ENCODE measurements at regions of chr11 and their contacts with region 1.

Region 1: GRCh38 chr11:104705490-104706190 is 192.6 kb downstream of the CASP12 start:
- DNase-seq: peak; percentile 83
- ATAC-seq: peak; percentile 93
- H3K4me3 Mint-ChIP-seq: peak overlapping the region; percentile 58
- H3K27ac Mint-ChIP-seq: peak overlapping the region; percentile 75
- H3K4me1 Mint-ChIP-seq: peaks cover 52% of the 10 kb centered on the region
- H3K27me3 Mint-ChIP-seq: no peaks in the 10 kb centered on the region

Region 2: GRCh38 chr11:104623518-104623917 is 82.1 kb before region 1 on chr11:
- CTCF ChIA-PET with region 1: no interaction called
- POLR2A ChIA-PET with region 1: interaction called, 3 read pairs
- intact Hi-C with region 1: loop called (anchors 1 to 2 kb)
- DNase-seq: no peak
- ATAC-seq: peak; percentile 69
- H3K4me3 Mint-ChIP-seq: no peak overlapping the region
- H3K27ac Mint-ChIP-seq: no peak overlapping the region
- H3K4me1 Mint-ChIP-seq: peaks cover 21% of the 10 kb centered on the region
- H3K27me3 Mint-ChIP-seq: no peaks in the 10 kb centered on the region

Region 3: DNA sequence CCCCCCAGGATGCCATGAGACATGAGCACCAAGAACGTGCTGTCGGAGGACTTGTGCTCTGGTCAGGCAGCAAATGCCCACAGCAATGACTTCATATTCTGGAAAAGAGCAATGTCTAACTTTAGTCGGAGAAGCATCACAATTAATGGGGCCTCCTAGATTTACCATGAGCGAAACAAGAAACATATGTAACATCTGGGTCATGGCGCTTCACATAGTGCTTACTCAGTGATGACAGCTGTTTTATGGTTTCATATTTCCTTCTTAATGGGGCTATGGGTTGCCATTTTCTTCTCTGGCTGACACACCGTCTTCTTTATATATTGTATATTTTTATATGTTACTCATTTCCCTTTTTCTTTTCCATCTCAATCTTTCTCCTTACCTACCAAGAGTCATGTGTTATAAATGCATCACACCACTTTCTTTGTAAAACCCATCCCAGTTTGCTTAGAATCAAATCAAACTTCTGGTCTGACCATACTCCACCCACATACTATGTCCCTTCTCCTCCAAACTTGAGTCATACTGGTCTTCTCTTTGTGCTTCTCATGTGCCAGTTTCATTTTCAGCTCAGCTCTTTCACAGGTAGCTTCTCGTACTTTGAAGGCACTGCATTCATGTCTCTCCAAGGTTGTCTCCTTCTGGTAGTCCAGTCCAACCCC is 202.0 kb after region 1 on chr11:
- CTCF ChIA-PET with region 1: no interaction called
- POLR2A ChIA-PET with region 1: no interaction called
- intact Hi-C with region 1: loop called (anchors 1 to 10 kb)
- DNase-seq: peak; percentile 11
- ATAC-seq: peak; percentile 92
- H3K4me3 Mint-ChIP-seq: no peak overlapping the region
- H3K27ac Mint-ChIP-seq: peak overlapping the region; percentile 47
- H3K4me1 Mint-ChIP-seq: peaks cover 30% of the 10 kb centered on the region
- H3K27me3 Mint-ChIP-seq: no peaks in the 10 kb centered on the region

Region 4: DNA sequence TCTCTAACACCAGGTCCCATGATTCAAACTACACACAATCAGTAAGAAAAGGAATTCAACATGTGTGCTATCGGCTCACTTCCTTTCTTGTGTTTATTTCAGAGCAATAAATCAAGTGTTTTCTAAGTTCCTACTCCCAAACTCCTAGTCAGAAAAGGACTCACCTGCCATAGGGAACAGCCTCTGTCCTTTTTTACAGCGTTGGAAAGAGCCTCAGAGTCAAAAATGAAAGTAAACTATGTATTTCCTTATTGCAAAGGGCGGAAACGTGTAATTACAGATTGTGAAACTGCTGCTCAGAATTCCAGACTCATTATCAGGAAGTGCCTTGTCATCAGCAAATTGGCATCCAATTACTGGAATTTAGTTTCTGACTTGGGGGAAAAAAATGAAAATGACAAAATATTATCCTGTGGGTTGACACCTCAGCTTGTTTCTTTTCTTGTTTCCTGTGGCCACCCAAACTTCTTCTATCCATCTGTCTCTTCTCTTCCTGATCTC is 262.8 kb after region 1 on chr11 and contains the start of gene CASP4:
- CTCF ChIA-PET with region 1: no interaction called
- POLR2A ChIA-PET with region 1: no interaction called
- intact Hi-C with region 1: loop called in 1 of 2 experiments (anchors 2 kb)
- DNase-seq: no peak
- ATAC-seq: peak; percentile 75
- H3K4me3 Mint-ChIP-seq: peak within 1 kb of the TSS; percentile 88
- H3K27ac Mint-ChIP-seq: peak within 1 kb of the TSS; percentile 96
- H3K4me1 Mint-ChIP-seq: peaks cover 25% of the 10 kb centered on the region
- H3K27me3 Mint-ChIP-seq: no peaks in the 10 kb centered on the region
- total RNA-seq, gene CASP4: 48.8 to 59.1 TPM

Region 5: DNA sequence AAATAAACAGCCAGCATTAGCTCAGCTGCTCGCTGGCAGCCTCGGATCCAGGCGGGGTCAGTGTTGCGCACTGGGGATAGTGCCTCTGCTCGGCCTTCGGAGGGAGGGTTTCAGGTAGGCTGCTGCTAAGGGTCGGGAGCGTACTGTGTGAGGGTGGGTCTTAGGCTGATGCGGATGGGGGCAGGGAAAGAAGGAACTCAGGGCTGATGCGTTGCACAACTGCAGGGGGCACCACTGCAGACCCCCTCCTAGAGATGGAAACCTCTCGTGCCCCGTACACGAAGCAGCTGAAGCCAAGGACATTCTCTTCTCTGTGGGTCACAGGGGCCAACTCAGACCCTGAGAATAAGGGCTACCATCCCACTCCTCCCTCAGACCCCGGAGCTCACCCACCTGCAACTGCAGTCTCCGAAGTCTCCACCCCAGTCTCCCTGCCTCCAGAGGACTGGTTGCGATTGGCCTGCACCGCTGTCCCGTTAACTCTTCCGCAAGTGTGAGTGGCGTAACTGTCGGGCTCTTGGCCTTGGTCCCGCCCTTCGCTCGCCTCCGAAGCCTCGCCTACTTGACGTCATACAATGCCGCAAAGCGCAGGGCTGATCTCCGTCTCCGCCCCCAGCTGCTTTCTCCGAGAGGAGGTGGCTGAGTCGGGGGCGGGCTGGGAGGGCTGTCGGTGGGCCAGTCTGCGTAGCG is 1371.4 kb after region 1 on chr11 and contains the start of gene KBTBD3:
- CTCF ChIA-PET with region 1: no interaction called
- POLR2A ChIA-PET with region 1: no interaction called
- intact Hi-C with region 1: loop called in 1 of 2 experiments (anchors 10 kb)
- DNase-seq: peak; percentile 99
- ATAC-seq: peak; percentile 97
- H3K4me3 Mint-ChIP-seq: peak within 1 kb of the TSS; percentile 87
- H3K27ac Mint-ChIP-seq: peak within 1 kb of the TSS; percentile 91
- H3K4me1 Mint-ChIP-seq: peaks cover 45% of the 10 kb centered on the region
- H3K27me3 Mint-ChIP-seq: no peaks in the 10 kb centered on the region
- total RNA-seq, gene KBTBD3: 8.9 to 9.1 TPM